Panc1 (cell line): ENCODE measurements at regions of chr19 and their contacts with region 1.

Region 1: DNA sequence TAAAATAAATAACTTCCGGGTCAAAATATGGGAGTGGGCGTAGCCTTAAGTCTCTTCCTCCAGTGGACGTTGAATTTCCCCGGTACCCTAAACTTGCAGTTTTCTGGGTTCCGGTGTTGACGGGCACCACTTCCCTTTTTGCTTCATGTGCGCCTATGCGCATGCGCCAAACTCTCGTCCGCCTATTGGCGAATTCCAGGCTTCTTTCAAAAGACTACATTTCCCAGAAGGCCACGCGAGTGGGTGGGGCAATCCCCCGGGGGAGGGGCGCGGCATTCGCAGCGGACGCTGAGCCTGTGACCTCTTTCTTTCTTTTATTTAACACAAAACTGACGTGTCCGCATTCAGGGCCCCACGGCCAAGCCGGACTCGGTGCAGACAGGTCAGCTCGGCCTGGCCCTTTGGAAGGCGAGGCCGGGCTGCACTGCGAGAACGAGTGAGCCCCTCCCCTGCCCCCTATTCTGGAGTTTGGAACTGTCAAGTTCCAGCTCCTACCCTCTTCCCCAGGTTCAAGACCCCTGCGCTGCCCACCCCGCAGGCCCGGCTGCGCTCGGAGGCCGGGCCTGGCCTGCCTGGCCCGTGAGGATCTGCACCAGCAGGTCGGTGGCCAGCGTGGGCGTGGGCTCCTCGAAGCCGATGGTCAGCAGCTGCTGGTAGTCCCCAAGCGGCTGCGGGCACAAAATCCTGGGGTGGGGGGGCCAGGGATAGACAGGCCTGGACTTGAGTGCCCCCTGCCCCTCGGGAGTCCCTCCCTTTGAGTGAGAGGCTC is 4.1 kb downstream of the C19orf67 start:
- DNase-seq: peak; percentile 97
- ATAC-seq: peak; percentile 94
- H3K4me3 ChIP-seq: peak overlapping the region; percentile 71 to 86
- H3K27ac ChIP-seq: peak overlapping the region; percentile 90
- H3K4me1 ChIP-seq: peaks cover 6% of the 10 kb centered on the region
- H3K27me3 ChIP-seq: no peaks in the 10 kb centered on the region
- CTCF ChIP-seq: no peak

Region 2: DNA sequence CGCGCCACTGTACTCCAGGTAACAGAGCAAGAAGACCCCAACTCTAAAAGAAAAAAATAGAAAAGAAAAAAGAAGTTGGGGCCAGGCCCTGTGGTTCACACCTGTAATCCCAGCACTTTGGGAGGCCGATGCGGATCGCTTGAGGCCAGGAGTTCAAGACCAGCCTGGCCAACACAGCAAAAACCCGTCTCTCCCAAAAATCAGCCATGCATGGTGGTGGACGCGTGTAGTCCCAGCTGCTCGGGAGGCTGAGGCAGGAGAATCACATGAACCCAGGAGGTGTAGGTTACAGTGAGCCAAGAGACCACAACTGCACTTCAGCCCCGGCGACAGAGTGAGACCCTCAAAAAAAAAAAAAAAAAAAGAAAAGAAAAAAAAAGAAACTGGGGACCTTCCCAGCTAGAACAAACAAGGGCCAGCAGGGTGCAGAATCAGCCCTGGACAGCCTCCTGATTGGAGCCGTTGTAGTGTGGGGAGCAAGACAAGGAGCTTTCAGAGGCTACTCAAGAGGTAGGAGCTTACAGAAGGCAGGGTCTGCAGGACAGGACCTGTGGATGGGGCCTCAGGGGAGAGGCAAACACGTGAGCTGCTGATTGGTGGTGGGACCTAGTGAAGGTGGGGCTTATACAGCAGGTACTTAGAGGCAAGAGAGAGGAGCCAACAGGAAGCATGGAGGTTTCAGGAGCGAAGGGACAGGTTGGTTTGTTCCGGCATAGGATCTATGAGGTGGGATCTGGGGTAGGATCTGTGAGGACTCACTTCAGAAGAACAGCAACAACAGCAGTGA is 254.1 kb before region 1 on chr19:
- CTCF ChIA-PET with region 1: interaction called, 12 read pairs
- POLR2A ChIA-PET with region 1: no interaction called
- in situ Hi-C with region 1: no loop called
- intact Hi-C with region 1: no loop called
- DNase-seq: no peak
- ATAC-seq: no peak
- H3K4me3 ChIP-seq: no peak overlapping the region
- H3K27ac ChIP-seq: no peak overlapping the region
- H3K4me1 ChIP-seq: peaks cover 3% of the 10 kb centered on the region; the same call in 1 of the 2 replicates
- H3K27me3 ChIP-seq: no peaks in the 10 kb centered on the region
- CTCF ChIP-seq: no peak

Region 3: DNA sequence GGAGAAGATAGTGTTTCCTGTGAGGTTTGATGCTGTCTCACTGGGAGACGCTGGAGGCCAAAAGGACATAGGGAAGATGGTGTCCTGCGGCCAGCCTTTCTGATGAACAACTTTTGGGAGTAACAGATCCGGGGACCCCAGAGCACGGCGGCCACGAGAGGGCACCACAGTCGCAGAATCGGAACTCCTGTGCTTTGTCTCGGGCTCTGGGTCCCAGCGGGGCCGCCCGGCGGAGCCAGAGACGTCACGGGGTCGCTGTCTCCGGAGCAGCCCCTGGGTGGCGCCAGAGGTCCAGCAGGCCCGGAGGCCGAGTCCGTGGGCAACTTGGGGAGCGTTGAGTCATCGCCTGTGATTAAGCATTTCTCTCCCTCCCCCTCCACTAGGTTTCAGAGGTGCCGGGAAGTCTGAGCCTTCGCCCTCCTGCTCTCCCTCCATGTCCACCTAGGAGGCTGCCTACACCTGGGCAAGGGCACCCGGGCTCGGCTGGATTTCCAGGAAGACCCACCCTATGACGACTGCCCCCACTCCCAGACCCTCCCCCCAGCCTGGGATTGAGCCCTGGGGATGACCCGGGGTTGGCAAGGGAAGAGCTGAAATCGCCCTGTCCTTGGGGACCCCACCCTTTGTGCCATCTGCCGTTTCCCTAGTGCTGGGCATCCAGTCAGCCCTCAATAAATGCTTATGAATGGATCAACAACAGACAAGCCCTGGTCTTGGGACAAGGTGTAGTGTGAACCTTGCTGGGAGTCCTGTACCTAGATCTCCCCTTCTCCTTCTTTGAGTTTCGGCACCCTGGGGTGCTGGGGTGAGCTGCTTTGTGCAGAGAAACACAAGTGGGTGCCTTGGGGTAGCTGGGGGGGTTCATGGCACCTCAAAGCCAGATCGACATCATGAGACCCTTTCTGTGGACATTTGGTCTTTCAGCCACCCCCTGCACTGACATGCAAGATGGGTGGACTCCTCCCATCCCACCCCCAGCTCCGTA is 201.2 kb before region 1 on chr19:
- CTCF ChIA-PET with region 1: no interaction called
- POLR2A ChIA-PET with region 1: interaction called, 5 read pairs
- in situ Hi-C with region 1: no loop called
- intact Hi-C with region 1: loop called (anchors 5 kb)
- DNase-seq: peak; percentile 72
- ATAC-seq: peak; percentile 90
- H3K4me3 ChIP-seq: peak overlapping the region; percentile 16 to 49
- H3K27ac ChIP-seq: peak overlapping the region; percentile 77
- H3K4me1 ChIP-seq: peaks cover 16% of the 10 kb centered on the region
- H3K27me3 ChIP-seq: no peaks in the 10 kb centered on the region
- CTCF ChIP-seq: peak; percentile 97

Region 4: GRCh38 chr19:14006243-14006765 is 75.2 kb before region 1 on chr19 and contains the start of gene RFX1:
- CTCF ChIA-PET with region 1: no interaction called
- POLR2A ChIA-PET with region 1: no interaction called
- in situ Hi-C with region 1: no loop called
- intact Hi-C with region 1: no loop called
- DNase-seq: peak; percentile 93
- ATAC-seq: peak; percentile 90
- H3K4me3 ChIP-seq: peak within 1 kb of the TSS; percentile 66 to 69
- H3K27ac ChIP-seq: peak within 1 kb of the TSS; percentile 91
- H3K4me1 ChIP-seq: peaks cover 12% of the 10 kb centered on the region
- H3K27me3 ChIP-seq: no peaks in the 10 kb centered on the region
- CTCF ChIP-seq: no peak
- total RNA-seq, gene RFX1: 15.2 TPM

Region 5: GRCh38 chr19:14093117-14093823 is 11.8 kb after region 1 on chr19:
- CTCF ChIA-PET with region 1: no interaction called
- POLR2A ChIA-PET with region 1: interaction called, 10 read pairs
- in situ Hi-C with region 1: no loop called
- intact Hi-C with region 1: no loop called
- DNase-seq: no peak
- ATAC-seq: no peak
- H3K4me3 ChIP-seq: no peak overlapping the region
- H3K27ac ChIP-seq: no peak overlapping the region
- H3K4me1 ChIP-seq: peaks cover 4% of the 10 kb centered on the region
- H3K27me3 ChIP-seq: no peaks in the 10 kb centered on the region
- CTCF ChIP-seq: no peak